Lower leg skin (tissue), 4 donors: ENCODE measurements at regions of chr5 and their contacts with region 1.

Region 1: DNA sequence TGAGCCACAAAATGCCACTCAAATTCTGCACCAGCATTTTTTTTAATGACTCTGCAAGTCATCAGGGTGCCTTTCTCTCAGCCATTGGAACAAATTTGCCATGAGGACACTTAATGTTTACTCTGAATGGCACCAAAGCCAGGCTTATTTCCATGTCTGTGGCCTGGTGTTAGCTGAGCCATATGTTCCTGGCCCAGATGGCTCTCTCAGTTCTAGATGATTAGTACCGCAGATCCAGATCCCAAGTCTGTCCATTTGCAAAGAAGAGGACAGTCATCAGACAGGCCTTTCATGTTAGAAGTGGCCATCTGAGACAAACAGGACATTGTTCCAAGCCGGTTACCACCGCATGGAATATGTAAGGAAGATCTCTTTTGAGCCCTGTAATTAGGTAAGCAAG is 70.3 kb downstream of the INSYN2B start:
- DNase-seq: no peak
- H3K4me3 ChIP-seq: no peak overlapping the region
- CTCF ChIP-seq: no peak
- POLR2A ChIP-seq: no peak

Region 2: DNA sequence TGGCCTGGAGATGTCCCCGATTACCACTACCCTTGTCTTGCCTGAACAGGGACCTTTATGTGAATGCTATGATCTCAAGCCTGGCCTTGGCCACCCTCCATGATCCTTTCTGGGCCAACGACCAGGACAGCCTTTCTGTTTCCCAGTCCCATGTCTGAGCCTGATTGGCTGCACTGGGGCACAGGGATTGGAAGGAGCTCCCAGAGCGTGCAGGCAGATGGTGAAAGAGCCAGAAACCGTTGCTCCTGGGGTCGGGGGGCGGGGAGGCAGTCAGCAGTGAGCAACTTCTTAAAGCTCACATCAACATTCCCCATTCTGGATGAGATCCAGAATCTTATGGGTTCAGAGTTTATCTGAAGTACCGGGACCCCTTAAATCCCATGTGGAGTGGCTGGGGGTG is 14.0 kb before region 1 on chr5:
- intact Hi-C with region 1: loop called (anchors 1 kb)
- DNase-seq: no peak
- H3K4me3 ChIP-seq: no peak overlapping the region
- CTCF ChIP-seq: no peak
- POLR2A ChIP-seq: no peak